T-cell (primary cell): ENCODE measurements at regions of chr1 and their contacts with region 1.

Region 1: GRCh38 chr1:113759333-113760101 is at the start of gene PHTF1:
- DNase-seq: peak in 33 of 35 experiments; percentile 3 to 67 (median 28)
- ATAC-seq: peak; percentile 66 to 79 (median 76)
- H3K4me3 ChIP-seq: peak within 1 kb of the TSS; percentile 77 to 89
- H3K4me3 Mint-ChIP-seq: peak within 1 kb of the TSS; percentile 87 to 90 (median 89)
- H3K27ac ChIP-seq: peak within 1 kb of the TSS; percentile 74
- H3K27ac Mint-ChIP-seq: peak within 1 kb of the TSS; percentile 95
- H3K4me1 ChIP-seq: peaks cover 2 to 15% of the 10 kb centered on the region in 2 experiments
- H3K4me1 Mint-ChIP-seq: peaks cover 12 to 27% (median 24%) of the 10 kb centered on the region in 3 donors
- H3K27me3 ChIP-seq: no peaks in the 10 kb centered on the region
- H3K27me3 Mint-ChIP-seq: no peaks in the 10 kb centered on the region
- total RNA-seq, gene PHTF1: 5.9 to 10.5 (median 9.2) TPM

Region 2: GRCh38 chr1:113783254-113784099 is 24.0 kb after region 1 on chr1:
- CTCF ChIA-PET with region 1: interaction called in 1 of 2 experiments, 4 read pairs
- POLR2A ChIA-PET with region 1: interaction called in 1 of 2 experiments, 12 read pairs
- DNase-seq: peak in 33 of 35 experiments; percentile 18 to 79 (median 46)
- ATAC-seq: peak; percentile 92 to 96 (median 95)
- H3K4me3 ChIP-seq: no peak overlapping the region
- H3K4me3 Mint-ChIP-seq: peak overlapping the region in 2 of 3 donors; percentile 37 to 60
- H3K27ac ChIP-seq: peak overlapping the region; percentile 79
- H3K27ac Mint-ChIP-seq: peak overlapping the region in 1 of 2 donors; percentile 96
- H3K4me1 ChIP-seq: peaks cover 33 to 54% of the 10 kb centered on the region in 2 experiments
- H3K4me1 Mint-ChIP-seq: peaks cover 34 to 35% (median 34%) of the 10 kb centered on the region in 3 donors
- H3K27me3 ChIP-seq: no peaks in the 10 kb centered on the region
- H3K27me3 Mint-ChIP-seq: no peaks in the 10 kb centered on the region

Region 3: GRCh38 chr1:113804421-113805255 is 45.1 kb after region 1 on chr1:
- CTCF ChIA-PET with region 1: interaction called in 1 of 2 experiments, 5 read pairs
- POLR2A ChIA-PET with region 1: interaction called, 3 to 14 read pairs
- DNase-seq: no peak
- ATAC-seq: no peak
- H3K4me3 ChIP-seq: no peak overlapping the region
- H3K4me3 Mint-ChIP-seq: peak overlapping the region in 2 of 3 donors; percentile 0 to 51
- H3K27ac ChIP-seq: no peak overlapping the region
- H3K27ac Mint-ChIP-seq: peak overlapping the region in 1 of 2 donors; percentile 45
- H3K4me1 ChIP-seq: peaks cover 13 to 22% of the 10 kb centered on the region in 2 experiments
- H3K4me1 Mint-ChIP-seq: peaks cover 84 to 91% (median 88%) of the 10 kb centered on the region in 3 donors
- H3K27me3 ChIP-seq: no peaks in the 10 kb centered on the region
- H3K27me3 Mint-ChIP-seq: no peaks in the 10 kb centered on the region

Region 4: DNA sequence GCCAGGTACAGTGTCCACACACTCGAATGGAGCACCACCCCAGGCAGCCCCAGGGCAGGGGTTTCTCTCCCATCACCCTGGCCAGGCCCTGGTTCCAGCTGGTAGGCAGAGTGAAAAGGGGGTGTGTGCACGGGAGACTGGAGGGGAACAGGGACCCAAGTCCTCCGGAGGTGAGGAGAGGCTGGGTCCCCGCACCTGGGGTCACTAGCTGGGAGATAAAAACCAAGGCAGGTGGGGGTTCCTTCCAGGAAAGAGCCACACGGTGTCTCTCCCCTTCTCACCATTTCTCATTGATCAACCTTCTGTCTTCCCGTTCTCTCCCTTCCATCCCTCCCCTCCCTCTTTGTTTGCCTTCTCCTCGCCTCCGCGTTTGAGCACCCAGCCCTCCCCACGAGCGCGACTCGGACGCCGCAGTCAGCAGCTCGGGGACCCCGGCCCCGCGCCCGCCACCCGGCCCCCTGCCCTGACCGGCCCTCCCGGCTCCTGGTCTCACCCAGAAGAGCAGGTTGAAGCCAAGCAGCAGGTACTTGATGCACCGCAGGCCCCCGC is 1329.4 kb after region 1 on chr1:
- CTCF ChIA-PET with region 1: no interaction called
- POLR2A ChIA-PET with region 1: interaction called in 1 of 2 experiments, 10 read pairs
- DNase-seq: peak in 2 of 35 experiments; percentile 9 to 10
- ATAC-seq: peak in 3 of 4 experiments; percentile 5 to 10 (median 5)
- H3K4me3 ChIP-seq: peak overlapping the region; percentile 26 to 69
- H3K4me3 Mint-ChIP-seq: peak overlapping the region; percentile 73 to 81 (median 81)
- H3K27ac ChIP-seq: peak overlapping the region; percentile 22
- H3K27ac Mint-ChIP-seq: peak overlapping the region in 1 of 2 donors; percentile 34
- H3K4me1 ChIP-seq: peaks cover 10 to 43% of the 10 kb centered on the region in 2 experiments
- H3K4me1 Mint-ChIP-seq: peaks cover 40 to 56% (median 45%) of the 10 kb centered on the region in 3 donors
- H3K27me3 ChIP-seq: peaks cover 0 to 2% of the 10 kb centered on the region in 2 experiments
- H3K27me3 Mint-ChIP-seq: peaks cover 0 to 4% of the 10 kb centered on the region in 2 donors